ENCODE measurements at regions of chr12 and their contacts with region 1.

Region 1: DNA sequence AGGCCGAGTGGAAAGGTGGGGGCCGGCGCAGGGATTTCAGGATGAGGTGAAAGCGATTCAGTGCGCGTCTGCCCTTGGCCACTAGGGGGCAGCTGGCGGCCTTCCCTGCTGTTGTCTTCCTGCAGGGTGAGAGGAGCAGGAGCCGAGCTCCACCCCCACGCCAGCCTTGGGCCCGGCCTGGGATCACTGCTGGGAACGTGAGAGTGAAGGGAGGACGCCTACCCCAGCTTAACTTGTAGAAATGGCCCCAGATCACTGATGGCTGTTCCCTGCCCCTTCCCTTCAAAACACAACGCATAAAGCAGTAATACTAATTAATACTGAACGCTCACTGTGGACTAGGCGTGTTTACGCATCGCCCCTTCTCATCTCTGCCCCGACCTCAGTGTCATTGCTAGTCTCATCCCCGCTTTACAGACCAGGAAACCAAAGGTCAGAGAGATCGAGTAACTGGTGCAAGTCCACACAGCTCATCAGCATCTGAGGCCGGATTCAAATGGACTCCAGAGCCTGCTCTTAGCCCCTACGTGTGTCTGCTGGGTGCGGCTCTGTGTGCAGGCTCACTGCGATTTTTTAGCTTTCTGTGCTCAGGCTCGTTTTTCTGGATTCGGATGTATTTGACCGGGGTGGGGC is 24.3 kb downstream of the MVK start:
- DNase-seq: peak; percentile 82 to 99 (median 91)

Region 2: GRCh38 chr12:109518820-109519665 is 78.9 kb before region 1 on chr12:
- intact Hi-C with region 1: no loop called
- DNase-seq: peak in 9 of 10 donors; percentile 35 to 94 (median 81)

Region 3: GRCh38 chr12:109637348-109637747 is 39.4 kb after region 1 on chr12:
- intact Hi-C with region 1: no loop called
- DNase-seq: peak in 1 of 10 donors; percentile 21

Region 4: DNA sequence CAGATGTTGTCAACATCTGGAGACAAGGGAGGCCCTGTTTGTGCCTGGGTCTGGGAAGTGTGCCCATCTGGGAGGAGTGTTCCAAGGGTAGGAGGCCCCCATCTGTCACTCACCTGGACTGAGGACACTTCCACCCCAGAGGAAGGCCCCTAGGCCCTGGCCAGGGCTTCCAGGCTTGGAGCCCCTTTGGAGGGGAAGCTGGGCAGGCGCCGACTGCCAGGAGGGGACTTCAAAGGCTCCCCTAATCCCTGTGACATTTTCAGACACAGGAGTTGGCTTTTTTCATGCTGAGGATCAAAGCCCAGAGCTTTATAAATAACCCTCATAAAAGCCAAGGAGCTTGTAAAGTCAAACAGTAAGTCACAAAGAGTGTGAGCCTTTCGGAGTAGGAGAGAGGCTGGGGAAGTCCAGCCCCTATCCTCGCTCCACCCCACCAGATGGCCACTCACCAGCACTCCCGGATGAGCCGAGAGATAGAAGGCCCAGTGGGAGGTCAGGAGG is 98.1 kb after region 1 on chr12:
- intact Hi-C with region 1: no loop called
- DNase-seq: peak in 2 of 10 donors; percentile 26 to 76

Region 5: DNA sequence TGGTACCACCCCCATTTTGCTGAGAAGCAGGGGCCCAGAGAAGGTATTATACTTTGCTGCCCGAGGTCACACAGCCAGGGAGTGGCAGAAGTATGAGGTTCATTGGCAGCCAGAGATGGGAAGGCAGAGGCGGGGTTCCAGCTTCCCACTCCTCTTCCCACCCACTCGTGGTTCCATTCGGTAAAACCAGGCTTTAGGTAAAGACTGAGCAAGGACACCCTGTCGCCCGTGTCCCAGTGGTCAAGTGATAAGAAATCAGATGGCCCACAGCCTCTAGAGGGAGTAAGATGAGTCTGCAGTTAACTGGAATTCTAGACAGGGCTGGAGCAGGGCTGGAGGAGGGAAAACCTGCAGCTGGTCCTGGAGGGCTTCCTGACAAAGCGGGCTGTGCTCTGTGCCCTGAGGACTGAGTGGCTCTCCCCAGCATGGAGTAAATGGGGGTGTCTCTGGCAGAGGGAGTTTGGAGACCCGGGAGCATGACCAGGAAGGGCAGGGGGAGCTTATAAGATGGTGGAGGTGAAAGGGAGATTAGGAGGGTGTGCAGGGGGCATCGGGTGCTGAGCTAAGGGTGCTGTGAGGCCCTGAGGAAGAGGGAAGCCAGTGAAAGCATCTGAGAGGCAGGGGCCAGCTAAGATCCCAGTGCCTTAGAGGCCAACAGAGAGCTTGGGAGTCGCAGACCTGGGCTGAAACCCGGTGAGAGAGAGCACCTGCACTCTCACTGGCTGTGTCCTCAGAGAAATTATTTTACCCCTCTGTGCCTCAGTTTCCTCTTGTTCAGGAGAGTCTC is 121.5 kb after region 1 on chr12:
- intact Hi-C with region 1: loop called (anchors 5 kb)
- DNase-seq: no peak

Measured in posterior cingulate gyrus (tissue), 11 donors.